ENCODE measurements at regions of chr7 and their contacts with region 1.

Region 1: DNA sequence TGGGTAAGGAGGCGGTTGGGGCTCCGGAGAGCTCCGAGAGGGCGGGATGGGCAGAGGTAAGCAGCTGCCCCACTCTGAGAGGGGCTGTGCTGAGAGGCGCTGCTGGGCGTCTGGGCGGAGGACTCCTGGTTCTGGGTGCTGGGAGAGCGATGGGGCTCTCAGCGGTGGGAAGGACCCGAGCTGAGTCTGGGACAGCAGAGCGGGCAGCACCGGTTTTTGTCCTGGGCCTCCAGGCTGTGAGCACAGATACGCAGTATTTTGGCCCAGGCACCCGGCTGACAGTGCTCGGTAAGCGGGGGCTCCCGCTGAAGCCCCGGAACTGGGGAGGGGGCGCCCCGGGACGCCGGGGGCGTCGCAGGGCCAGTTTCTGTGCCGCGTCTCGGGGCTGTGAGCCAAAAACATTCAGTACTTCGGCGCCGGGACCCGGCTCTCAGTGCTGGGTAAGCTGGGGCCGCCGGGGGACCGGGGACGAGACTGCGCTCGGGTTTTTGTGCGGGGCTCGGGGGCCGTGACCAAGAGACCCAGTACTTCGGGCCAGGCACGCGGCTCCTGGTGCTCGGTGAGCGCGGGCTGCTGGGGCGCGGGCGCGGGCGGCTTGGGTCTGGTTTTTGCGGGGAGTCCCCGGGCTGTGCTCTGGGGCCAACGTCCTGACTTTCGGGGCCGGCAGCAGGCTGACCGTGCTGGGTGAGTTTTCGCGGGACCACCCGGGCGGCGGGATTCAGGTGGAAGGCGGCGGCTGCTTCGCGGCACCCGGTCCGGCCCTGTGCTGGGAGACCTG is 26.0 kb downstream of the PRSS2 start:
- DNase-seq: peak in 3 of 9 experiments; percentile 34 to 83 (median 35)
- ATAC-seq: peak; percentile 4
- H3K4me3 ChIP-seq: peak overlapping the region; percentile 81
- H3K4me3 Mint-ChIP-seq: peak overlapping the region; percentile 99
- H3K27ac ChIP-seq: peak overlapping the region; percentile 99
- H3K27ac Mint-ChIP-seq: peak overlapping the region; percentile 100
- H3K4me1 ChIP-seq: peaks cover 63% of the 10 kb centered on the region
- H3K4me1 Mint-ChIP-seq: peaks cover 70% of the 10 kb centered on the region
- H3K27me3 ChIP-seq: no peaks in the 10 kb centered on the region
- H3K27me3 Mint-ChIP-seq: no peaks in the 10 kb centered on the region
- CTCF ChIP-seq: no peak

Region 2: GRCh38 chr7:142308326-142308725 is 488.5 kb before region 1 on chr7:
- CTCF ChIA-PET with region 1: no interaction called
- POLR2A ChIA-PET with region 1: interaction called, 17 read pairs
- intact Hi-C with region 1: no loop called
- DNase-seq: no peak
- ATAC-seq: no peak
- H3K4me3 ChIP-seq: no peak overlapping the region
- H3K4me3 Mint-ChIP-seq: peak overlapping the region; percentile 64
- H3K27ac ChIP-seq: peak overlapping the region in 1 of 2 experiments; percentile 15
- H3K27ac Mint-ChIP-seq: peak overlapping the region; percentile 41
- H3K4me1 ChIP-seq: peaks cover 20% of the 10 kb centered on the region
- H3K4me1 Mint-ChIP-seq: peaks cover 19% of the 10 kb centered on the region
- H3K27me3 ChIP-seq: no peaks in the 10 kb centered on the region
- H3K27me3 Mint-ChIP-seq: no peaks in the 10 kb centered on the region
- CTCF ChIP-seq: no peak

Region 3: GRCh38 chr7:142345811-142346210 is 451.0 kb before region 1 on chr7:
- CTCF ChIA-PET with region 1: no interaction called
- POLR2A ChIA-PET with region 1: interaction called, 22 read pairs
- intact Hi-C with region 1: no loop called
- DNase-seq: peak in 5 of 9 experiments; percentile 33 to 70 (median 51)
- ATAC-seq: peak; percentile 90
- H3K4me3 ChIP-seq: no peak overlapping the region
- H3K4me3 Mint-ChIP-seq: peak overlapping the region; percentile 38
- H3K27ac ChIP-seq: peak overlapping the region; percentile 11 to 17
- H3K27ac Mint-ChIP-seq: peak overlapping the region; percentile 66
- H3K4me1 ChIP-seq: peaks cover 17% of the 10 kb centered on the region
- H3K4me1 Mint-ChIP-seq: peaks cover 35% of the 10 kb centered on the region
- H3K27me3 ChIP-seq: no peaks in the 10 kb centered on the region
- H3K27me3 Mint-ChIP-seq: no peaks in the 10 kb centered on the region
- CTCF ChIP-seq: no peak

Region 4: DNA sequence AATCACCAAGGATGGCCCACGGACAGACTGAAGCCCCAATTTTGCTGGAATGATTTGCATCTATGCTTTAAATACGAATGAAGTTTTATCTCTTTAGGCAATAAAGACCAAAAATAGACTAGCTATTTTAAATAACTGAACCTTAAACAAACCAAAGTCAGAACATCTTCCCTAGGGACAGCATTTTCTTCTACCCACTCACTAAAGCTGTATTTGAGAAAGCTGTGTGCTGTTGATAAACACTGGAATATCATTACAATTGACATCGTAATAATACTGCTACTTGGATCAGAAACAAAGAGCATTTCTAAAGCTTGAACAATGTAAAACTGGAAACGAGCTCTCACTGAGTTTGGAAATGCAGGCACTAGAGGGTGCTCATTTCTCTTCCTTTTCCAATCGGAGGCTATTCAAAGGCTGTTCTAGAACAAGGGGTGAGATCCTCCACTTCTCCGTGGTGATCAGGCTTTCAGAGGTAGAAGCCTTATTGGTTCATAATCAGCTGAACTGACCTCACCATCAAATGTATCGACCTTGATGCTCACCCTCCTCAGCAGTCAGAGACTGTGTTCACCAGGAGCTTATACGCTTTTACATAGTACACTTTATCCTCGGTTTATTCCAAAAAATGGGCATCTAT is 272.9 kb before region 1 on chr7:
- CTCF ChIA-PET with region 1: no interaction called
- POLR2A ChIA-PET with region 1: interaction called, 25 read pairs
- intact Hi-C with region 1: loop called in 1 of 2 experiments (anchors 5 kb)
- DNase-seq: no peak
- ATAC-seq: no peak
- H3K4me3 ChIP-seq: no peak overlapping the region
- H3K4me3 Mint-ChIP-seq: no peak overlapping the region
- H3K27ac ChIP-seq: no peak overlapping the region
- H3K27ac Mint-ChIP-seq: peak overlapping the region; percentile 14
- H3K4me1 ChIP-seq: peaks cover 12% of the 10 kb centered on the region
- H3K4me1 Mint-ChIP-seq: peaks cover 18% of the 10 kb centered on the region
- H3K27me3 ChIP-seq: no peaks in the 10 kb centered on the region
- H3K27me3 Mint-ChIP-seq: no peaks in the 10 kb centered on the region
- CTCF ChIP-seq: no peak

Region 5: GRCh38 chr7:142626420-142627035 is 170.3 kb before region 1 on chr7:
- CTCF ChIA-PET with region 1: no interaction called
- POLR2A ChIA-PET with region 1: interaction called, 13 read pairs
- intact Hi-C with region 1: no loop called
- DNase-seq: peak; percentile 30 to 75 (median 68)
- ATAC-seq: peak; percentile 76
- H3K4me3 ChIP-seq: no peak overlapping the region
- H3K4me3 Mint-ChIP-seq: peak overlapping the region; percentile 78
- H3K27ac ChIP-seq: no peak overlapping the region
- H3K27ac Mint-ChIP-seq: peak overlapping the region; percentile 78
- H3K4me1 ChIP-seq: no peaks in the 10 kb centered on the region
- H3K4me1 Mint-ChIP-seq: peaks cover 2% of the 10 kb centered on the region
- H3K27me3 ChIP-seq: no peaks in the 10 kb centered on the region
- H3K27me3 Mint-ChIP-seq: no peaks in the 10 kb centered on the region
- CTCF ChIP-seq: peak; percentile 53

Region 6: GRCh38 chr7:142720986-142721385 is 75.8 kb before region 1 on chr7:
- CTCF ChIA-PET with region 1: no interaction called
- POLR2A ChIA-PET with region 1: no interaction called
- intact Hi-C with region 1: no loop called
- DNase-seq: no peak
- ATAC-seq: no peak
- H3K4me3 ChIP-seq: peak overlapping the region in 1 of 2 experiments; percentile 36
- H3K4me3 Mint-ChIP-seq: peak overlapping the region; percentile 49
- H3K27ac ChIP-seq: peak overlapping the region in 1 of 2 experiments; percentile 63
- H3K27ac Mint-ChIP-seq: peak overlapping the region; percentile 75
- H3K4me1 ChIP-seq: peaks cover 18% of the 10 kb centered on the region
- H3K4me1 Mint-ChIP-seq: peaks cover 26% of the 10 kb centered on the region
- H3K27me3 ChIP-seq: no peaks in the 10 kb centered on the region
- H3K27me3 Mint-ChIP-seq: no peaks in the 10 kb centered on the region
- CTCF ChIP-seq: no peak

Region 7: GRCh38 chr7:142782922-142783900 is 13.6 kb before region 1 on chr7:
- CTCF ChIA-PET with region 1: interaction called, 31 read pairs
- POLR2A ChIA-PET with region 1: interaction called, 2,372 read pairs
- intact Hi-C with region 1: loop called (anchors 1 kb)
- DNase-seq: peak; percentile 57 to 91 (median 80)
- ATAC-seq: peak; percentile 34
- H3K4me3 ChIP-seq: peak overlapping the region; percentile 37 to 44
- H3K4me3 Mint-ChIP-seq: peak overlapping the region; percentile 79
- H3K27ac ChIP-seq: peak overlapping the region; percentile 44 to 50
- H3K27ac Mint-ChIP-seq: peak overlapping the region; percentile 99
- H3K4me1 ChIP-seq: peaks cover 8% of the 10 kb centered on the region
- H3K4me1 Mint-ChIP-seq: peaks cover 12% of the 10 kb centered on the region
- H3K27me3 ChIP-seq: no peaks in the 10 kb centered on the region
- H3K27me3 Mint-ChIP-seq: no peaks in the 10 kb centered on the region
- CTCF ChIP-seq: peak; percentile 65

Region 8: DNA sequence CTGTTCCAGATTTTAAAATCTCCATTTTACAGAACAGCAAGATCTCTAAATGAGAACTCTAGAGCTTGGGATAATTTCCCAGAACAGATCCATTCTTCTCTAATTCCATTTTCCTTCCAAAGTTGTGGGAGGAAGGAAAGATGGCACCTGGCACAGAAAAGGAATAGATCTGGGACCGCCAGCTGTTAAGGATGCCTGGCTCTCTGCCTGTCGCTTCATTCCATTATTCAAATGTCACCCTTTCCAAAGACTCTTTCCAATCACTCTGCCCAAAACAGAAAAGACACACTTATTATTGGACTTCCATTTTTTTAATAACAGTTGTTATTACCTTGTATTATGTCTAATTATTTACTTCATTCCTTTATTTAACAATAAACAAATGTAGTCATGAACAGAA is 230.9 kb after region 1 on chr7:
- CTCF ChIA-PET with region 1: no interaction called
- POLR2A ChIA-PET with region 1: no interaction called
- intact Hi-C with region 1: no loop called
- DNase-seq: no peak
- ATAC-seq: no peak
- H3K4me3 ChIP-seq: no peak overlapping the region
- H3K4me3 Mint-ChIP-seq: no peak overlapping the region
- H3K27ac ChIP-seq: no peak overlapping the region
- H3K27ac Mint-ChIP-seq: no peak overlapping the region
- H3K4me1 ChIP-seq: no peaks in the 10 kb centered on the region
- H3K4me1 Mint-ChIP-seq: no peaks in the 10 kb centered on the region
- H3K27me3 ChIP-seq: no peaks in the 10 kb centered on the region
- H3K27me3 Mint-ChIP-seq: peaks cover 2% of the 10 kb centered on the region
- CTCF ChIP-seq: no peak

Measured in CD8-positive, alpha-beta T cell (primary cell).